Esophagus muscularis mucosa (tissue), 4 donors: ENCODE measurements at regions of chr6 and their contacts with region 1.

Region 1: DNA sequence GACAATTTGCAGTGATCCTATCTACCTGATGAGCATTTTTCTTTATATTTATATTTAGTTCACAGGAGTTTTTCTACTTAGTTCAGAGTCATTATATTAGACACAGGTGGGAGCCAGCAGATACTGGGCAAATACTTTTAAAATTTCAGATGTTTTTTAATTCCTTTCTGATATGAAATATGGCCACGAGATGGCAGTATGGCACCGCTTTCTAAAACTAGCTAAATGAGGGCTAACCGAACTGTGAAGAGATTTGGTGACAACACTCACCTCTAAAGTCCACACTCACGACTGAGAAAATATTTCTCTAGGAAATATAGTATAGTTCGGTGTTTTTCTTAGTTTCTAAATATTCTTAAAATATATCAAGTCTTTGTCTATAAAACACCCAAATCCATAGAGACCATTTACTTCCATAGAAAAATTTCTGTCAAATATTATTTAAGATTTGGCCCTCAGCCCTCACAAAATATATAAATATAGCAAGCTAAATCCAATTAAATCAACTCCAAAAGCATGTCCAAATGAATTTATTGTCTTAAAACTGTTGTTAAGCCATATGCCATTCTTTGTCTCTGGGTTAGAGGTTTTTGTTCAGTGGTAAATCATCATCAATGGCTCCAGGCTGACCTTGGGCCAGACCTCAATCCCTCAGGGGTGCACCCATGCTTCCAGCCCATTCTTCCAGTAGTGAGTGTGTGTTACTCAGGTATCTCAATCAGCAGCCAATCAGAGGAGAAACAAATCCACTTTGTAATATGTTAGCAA is 63.6 kb downstream of the HUS1B start:
- DNase-seq: no peak
- H3K4me3 ChIP-seq: no peak overlapping the region
- H3K27ac ChIP-seq: peak overlapping the region; percentile 70 to 76 (median 74)
- H3K4me1 ChIP-seq: peaks cover 0 to 36% (median 20%) of the 10 kb centered on the region in 4 donors
- H3K27me3 ChIP-seq: no peaks in the 10 kb centered on the region
- CTCF ChIP-seq: peak; percentile 68 to 81 (median 76)
- EP300 ChIP-seq: no peak
- POLR2A ChIP-seq: no peak

Region 2: GRCh38 chr6:701700-702479 is 108.6 kb after region 1 on chr6:
- intact Hi-C with region 1: loop called (anchors 10 kb)
- DNase-seq: no peak
- H3K4me3 ChIP-seq: no peak overlapping the region
- H3K27ac ChIP-seq: no peak overlapping the region
- H3K4me1 ChIP-seq: peaks cover 0 to 5% (median 0%) of the 10 kb centered on the region in 4 donors
- H3K27me3 ChIP-seq: no peaks in the 10 kb centered on the region
- CTCF ChIP-seq: no peak
- EP300 ChIP-seq: no peak
- POLR2A ChIP-seq: no peak

Region 3: GRCh38 chr6:1436334-1437306 is 843.3 kb after region 1 on chr6:
- intact Hi-C with region 1: loop called (anchors 5 kb)
- DNase-seq: no peak
- H3K4me3 ChIP-seq: no peak overlapping the region
- H3K27ac ChIP-seq: no peak overlapping the region
- H3K4me1 ChIP-seq: peaks cover 0 to 9% (median 5%) of the 10 kb centered on the region in 4 donors
- H3K27me3 ChIP-seq: peaks cover 0 to 17% (median 0%) of the 10 kb centered on the region in 4 donors
- CTCF ChIP-seq: peak; percentile 66 to 86 (median 76)
- EP300 ChIP-seq: no peak
- POLR2A ChIP-seq: no peak